Activated CD4-positive, alpha-beta memory T cell treated with anti-CD3 and anti-CD28 coated beads, Interleukin-2, amount 10 ng/mL, durations not matched to agents 7 days and 5 days (primary cell): ENCODE measurements at regions of chr4 and their contacts with region 1.

Region 1: GRCh38 chr4:109826719-109827118 is 1.1 kb upstream of the RRH start:
- DNase-seq: no peak
- H3K4me3 Mint-ChIP-seq: no peak overlapping the region
- H3K27ac Mint-ChIP-seq: no peak overlapping the region
- H3K4me1 Mint-ChIP-seq: peaks cover 5% of the 10 kb centered on the region
- H3K27me3 Mint-ChIP-seq: no peaks in the 10 kb centered on the region

Region 2: DNA sequence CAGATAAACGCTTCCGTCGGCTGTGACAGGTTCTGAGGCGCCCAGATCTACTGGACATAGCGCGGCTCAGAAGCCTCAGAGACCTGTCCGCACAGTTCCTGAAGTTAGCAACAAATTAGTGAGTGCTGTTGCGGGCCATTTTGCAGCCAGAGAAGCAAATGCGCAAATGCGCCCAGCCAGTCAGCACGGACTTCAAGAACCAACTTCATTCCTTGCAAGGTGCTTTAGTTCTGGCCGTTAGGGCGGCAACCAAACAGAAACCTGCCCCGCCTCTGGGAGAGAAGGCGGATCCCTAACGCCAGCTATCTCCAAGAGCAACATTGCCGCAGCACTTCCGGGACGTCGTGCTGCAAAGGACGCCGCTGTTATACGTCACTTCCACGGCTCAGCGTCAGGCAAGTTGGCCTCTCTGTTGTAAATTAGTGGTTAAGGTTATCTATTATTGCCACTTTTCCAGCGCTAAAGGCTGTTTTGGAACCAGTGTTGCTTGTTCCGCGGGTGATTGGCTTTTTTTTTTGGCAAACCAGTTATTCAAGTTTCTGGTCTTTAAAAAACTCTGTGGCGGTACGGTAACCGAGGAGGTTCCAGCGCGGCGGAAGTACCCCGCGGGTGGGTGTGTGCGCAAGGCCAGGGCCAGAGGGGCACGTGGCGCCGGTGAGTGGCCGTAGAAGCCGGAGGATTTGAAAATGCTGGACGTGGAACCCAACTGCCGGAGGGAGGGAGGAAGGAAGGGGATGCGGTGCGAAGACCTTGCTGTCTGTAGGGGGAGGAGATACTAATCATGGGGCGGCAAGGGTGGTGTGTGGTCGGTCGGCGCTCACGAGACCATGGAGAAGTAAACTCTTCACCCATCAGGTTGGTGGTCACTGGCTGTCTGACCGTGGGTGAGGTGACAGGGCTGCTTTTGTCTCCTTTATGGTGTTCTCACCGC is 11.3 kb before region 1 on chr4 and contains the start of gene GAR1:
- CTCF ChIA-PET with region 1: interaction called, 11 read pairs
- POLR2A ChIA-PET with region 1: interaction called, 4 read pairs
- DNase-seq: peak; percentile 93
- H3K4me3 Mint-ChIP-seq: peak within 1 kb of the TSS; percentile 98
- H3K27ac Mint-ChIP-seq: peak within 1 kb of the TSS; percentile 97
- H3K4me1 Mint-ChIP-seq: peaks cover 69% of the 10 kb centered on the region
- H3K27me3 Mint-ChIP-seq: no peaks in the 10 kb centered on the region
- total RNA-seq, gene GAR1: 26.1 to 27.5 TPM

Region 3: GRCh38 chr4:110155654-110156053 is 328.9 kb after region 1 on chr4:
- CTCF ChIA-PET with region 1: no interaction called
- POLR2A ChIA-PET with region 1: no interaction called
- DNase-seq: no peak
- H3K4me3 Mint-ChIP-seq: no peak overlapping the region
- H3K27ac Mint-ChIP-seq: no peak overlapping the region
- H3K4me1 Mint-ChIP-seq: peaks cover 4% of the 10 kb centered on the region
- H3K27me3 Mint-ChIP-seq: no peaks in the 10 kb centered on the region